Activated naive CD8-positive, alpha-beta T cell treated with anti-CD3 and anti-CD28 coated beads, Interleukin-2, amount 10 ng/mL, durations not matched to agents 7 days and 5 days (primary cell): ENCODE measurements at regions of chr22 and their contacts with region 1.

Region 1: DNA sequence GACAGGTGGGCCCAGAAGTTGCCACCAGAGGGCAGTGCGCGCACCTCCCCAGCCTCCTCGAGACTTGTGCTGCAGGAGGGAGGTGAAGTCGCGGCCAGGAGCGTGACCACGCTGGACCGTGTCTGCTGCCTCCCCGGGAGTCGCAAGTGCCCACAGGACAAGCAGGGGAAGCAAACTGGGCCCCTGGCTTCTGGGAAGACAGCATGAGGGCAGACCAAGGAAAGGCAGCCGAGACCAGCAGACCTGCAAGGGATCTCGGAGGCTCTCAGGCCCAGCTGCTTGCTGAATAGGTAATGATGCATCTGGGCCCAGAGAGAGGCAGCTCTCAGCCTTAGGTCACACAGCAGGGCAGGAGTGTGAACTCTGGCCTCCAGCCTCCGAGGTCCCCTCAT is 17.0 kb upstream of the IL2RB start:
- DNase-seq: peak; percentile 87
- ATAC-seq: peak; percentile 49
- H3K4me3 Mint-ChIP-seq: peak overlapping the region; percentile 80
- H3K27ac Mint-ChIP-seq: peak overlapping the region; percentile 89
- H3K4me1 Mint-ChIP-seq: peaks cover 87% of the 10 kb centered on the region
- H3K27me3 Mint-ChIP-seq: no peaks in the 10 kb centered on the region

Region 2: DNA sequence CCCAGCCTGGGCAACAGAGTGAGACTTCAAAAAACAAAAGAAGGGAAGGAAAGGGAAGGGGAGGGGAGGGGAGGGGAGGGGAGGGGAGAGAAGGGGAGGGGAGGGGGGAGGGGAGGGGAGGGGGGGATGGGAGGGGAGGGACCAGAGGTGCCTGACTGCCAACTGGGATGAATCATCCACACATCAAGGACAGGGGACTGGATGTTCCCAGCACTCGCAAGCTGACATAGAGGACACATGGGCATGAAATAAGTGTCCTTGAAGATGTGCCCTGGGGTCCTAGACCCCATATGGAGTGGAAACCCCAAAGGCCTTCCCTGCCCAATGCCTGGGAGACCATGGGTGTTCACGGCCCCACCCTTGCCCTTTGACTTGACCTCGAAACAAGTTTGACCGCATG is 167.2 kb before region 1 on chr22:
- POLR2A ChIA-PET with region 1: no interaction called
- DNase-seq: no peak
- ATAC-seq: no peak
- H3K4me3 Mint-ChIP-seq: no peak overlapping the region
- H3K27ac Mint-ChIP-seq: no peak overlapping the region
- H3K4me1 Mint-ChIP-seq: no peaks in the 10 kb centered on the region
- H3K27me3 Mint-ChIP-seq: peaks cover 19% of the 10 kb centered on the region

Region 3: GRCh38 chr22:37077884-37078485 is 88.7 kb before region 1 on chr22:
- POLR2A ChIA-PET with region 1: interaction called, 12 read pairs
- DNase-seq: peak; percentile 94
- ATAC-seq: peak; percentile 17
- H3K4me3 Mint-ChIP-seq: peak overlapping the region; percentile 85
- H3K27ac Mint-ChIP-seq: peak overlapping the region; percentile 100
- H3K4me1 Mint-ChIP-seq: peaks cover 47% of the 10 kb centered on the region
- H3K27me3 Mint-ChIP-seq: no peaks in the 10 kb centered on the region

Region 4: GRCh38 chr22:37088108-37088605 is 78.5 kb before region 1 on chr22:
- POLR2A ChIA-PET with region 1: no interaction called
- DNase-seq: no peak
- ATAC-seq: peak; percentile 13
- H3K4me3 Mint-ChIP-seq: no peak overlapping the region
- H3K27ac Mint-ChIP-seq: no peak overlapping the region
- H3K4me1 Mint-ChIP-seq: peaks cover 19% of the 10 kb centered on the region
- H3K27me3 Mint-ChIP-seq: no peaks in the 10 kb centered on the region

Region 5: GRCh38 chr22:37121887-37122591 is 44.6 kb before region 1 on chr22:
- POLR2A ChIA-PET with region 1: interaction called, 31 read pairs
- DNase-seq: peak; percentile 82
- ATAC-seq: peak; percentile 98
- H3K4me3 Mint-ChIP-seq: peak overlapping the region; percentile 85
- H3K27ac Mint-ChIP-seq: peak overlapping the region; percentile 98
- H3K4me1 Mint-ChIP-seq: peaks cover 64% of the 10 kb centered on the region
- H3K27me3 Mint-ChIP-seq: no peaks in the 10 kb centered on the region

Region 6: GRCh38 chr22:37133304-37134018 is 33.2 kb before region 1 on chr22:
- POLR2A ChIA-PET with region 1: interaction called, 10 read pairs
- DNase-seq: no peak
- ATAC-seq: peak; percentile 22
- H3K4me3 Mint-ChIP-seq: no peak overlapping the region
- H3K27ac Mint-ChIP-seq: peak overlapping the region; percentile 64
- H3K4me1 Mint-ChIP-seq: peaks cover 26% of the 10 kb centered on the region
- H3K27me3 Mint-ChIP-seq: no peaks in the 10 kb centered on the region

Region 7: DNA sequence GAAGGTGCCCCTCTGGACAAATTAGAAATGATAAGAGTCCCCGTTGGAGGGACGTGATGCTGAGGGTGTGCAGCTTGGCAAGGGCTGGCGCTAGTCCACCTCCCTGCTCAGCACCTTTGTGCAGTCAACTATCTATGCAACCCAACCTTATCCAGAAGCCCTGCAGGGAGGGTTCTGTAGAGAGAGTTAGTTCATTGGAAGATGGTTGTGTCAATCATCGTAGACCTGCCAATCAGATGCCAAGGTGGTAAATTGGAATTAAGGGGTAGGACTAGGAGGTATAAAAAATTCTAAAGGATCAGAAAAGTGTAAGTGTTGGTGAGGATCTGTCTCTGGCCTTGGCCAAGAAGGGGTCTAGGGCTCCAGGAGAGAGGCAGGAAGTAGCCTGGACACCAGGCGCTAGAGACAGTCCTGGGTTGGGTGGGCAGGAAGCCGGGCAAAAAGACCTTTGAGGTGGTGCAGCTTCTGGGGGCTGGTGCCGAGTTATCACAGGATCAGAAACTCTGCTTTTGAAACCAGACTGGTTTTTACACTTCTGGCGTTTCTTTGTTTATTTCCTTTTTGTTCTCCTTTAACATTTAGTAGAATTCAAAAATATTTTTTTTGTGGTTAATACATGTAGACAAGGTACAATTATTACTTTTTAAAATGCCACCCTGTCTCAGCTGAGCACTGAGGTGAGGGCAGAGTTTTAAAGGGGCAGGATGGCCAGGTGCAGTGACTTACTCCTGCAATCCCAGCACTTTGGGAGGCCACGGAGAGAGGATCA is 19.7 kb after region 1 on chr22:
- POLR2A ChIA-PET with region 1: interaction called, 12 read pairs
- DNase-seq: peak; percentile 65
- ATAC-seq: peak; percentile 85
- H3K4me3 Mint-ChIP-seq: peak overlapping the region; percentile 71
- H3K27ac Mint-ChIP-seq: peak overlapping the region; percentile 90
- H3K4me1 Mint-ChIP-seq: peaks cover 46% of the 10 kb centered on the region
- H3K27me3 Mint-ChIP-seq: no peaks in the 10 kb centered on the region

Region 8: DNA sequence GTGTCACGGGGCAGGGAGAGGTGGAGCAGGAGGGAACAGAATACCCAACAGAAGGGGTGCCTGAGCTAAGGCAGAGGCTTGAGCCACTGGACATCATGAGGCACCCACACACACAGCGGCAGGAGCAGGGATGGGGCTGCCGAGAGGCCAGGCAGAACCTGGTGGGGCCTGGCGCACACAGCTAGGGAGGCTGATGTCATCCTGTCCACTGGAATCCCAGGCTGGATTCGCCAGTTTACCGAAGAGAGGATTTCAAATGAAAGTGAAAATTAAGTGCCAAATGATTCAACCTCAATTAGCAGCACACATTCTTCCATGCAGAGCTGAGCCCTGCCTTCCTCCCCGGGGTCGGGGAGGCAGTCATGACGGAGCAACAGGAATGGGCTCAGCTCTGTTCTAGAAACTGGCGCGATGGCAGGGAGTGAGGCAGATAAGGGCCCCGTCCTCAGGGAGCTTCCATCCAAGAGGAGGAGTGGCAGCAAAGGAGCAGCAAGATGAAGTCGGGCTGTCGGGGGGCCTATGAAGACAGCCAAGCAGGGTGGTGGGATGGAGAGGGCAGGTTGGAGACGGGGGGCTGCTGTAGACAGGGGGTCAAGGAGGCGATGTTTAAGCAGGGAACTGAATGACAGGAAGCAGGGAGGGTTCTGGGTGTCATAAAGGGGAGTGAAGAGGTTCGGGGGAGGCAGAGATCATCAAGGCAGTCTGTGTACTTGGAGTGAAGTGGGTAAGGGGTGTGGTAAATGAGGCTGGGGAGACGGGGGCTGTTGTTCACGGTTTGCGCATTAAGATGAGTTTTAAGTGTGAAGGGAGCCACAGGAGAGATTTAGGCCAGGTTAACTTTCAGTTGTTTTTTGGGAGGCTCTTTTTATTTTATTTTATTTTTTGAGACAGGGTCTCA is 70.9 kb after region 1 on chr22:
- POLR2A ChIA-PET with region 1: interaction called, 50 read pairs
- DNase-seq: no peak
- ATAC-seq: no peak
- H3K4me3 Mint-ChIP-seq: peak overlapping the region; percentile 100
- H3K27ac Mint-ChIP-seq: peak overlapping the region; percentile 100
- H3K4me1 Mint-ChIP-seq: peaks cover 84% of the 10 kb centered on the region
- H3K27me3 Mint-ChIP-seq: no peaks in the 10 kb centered on the region